ENCODE measurements at regions of chr19 and their contacts with region 1.

Region 1: DNA sequence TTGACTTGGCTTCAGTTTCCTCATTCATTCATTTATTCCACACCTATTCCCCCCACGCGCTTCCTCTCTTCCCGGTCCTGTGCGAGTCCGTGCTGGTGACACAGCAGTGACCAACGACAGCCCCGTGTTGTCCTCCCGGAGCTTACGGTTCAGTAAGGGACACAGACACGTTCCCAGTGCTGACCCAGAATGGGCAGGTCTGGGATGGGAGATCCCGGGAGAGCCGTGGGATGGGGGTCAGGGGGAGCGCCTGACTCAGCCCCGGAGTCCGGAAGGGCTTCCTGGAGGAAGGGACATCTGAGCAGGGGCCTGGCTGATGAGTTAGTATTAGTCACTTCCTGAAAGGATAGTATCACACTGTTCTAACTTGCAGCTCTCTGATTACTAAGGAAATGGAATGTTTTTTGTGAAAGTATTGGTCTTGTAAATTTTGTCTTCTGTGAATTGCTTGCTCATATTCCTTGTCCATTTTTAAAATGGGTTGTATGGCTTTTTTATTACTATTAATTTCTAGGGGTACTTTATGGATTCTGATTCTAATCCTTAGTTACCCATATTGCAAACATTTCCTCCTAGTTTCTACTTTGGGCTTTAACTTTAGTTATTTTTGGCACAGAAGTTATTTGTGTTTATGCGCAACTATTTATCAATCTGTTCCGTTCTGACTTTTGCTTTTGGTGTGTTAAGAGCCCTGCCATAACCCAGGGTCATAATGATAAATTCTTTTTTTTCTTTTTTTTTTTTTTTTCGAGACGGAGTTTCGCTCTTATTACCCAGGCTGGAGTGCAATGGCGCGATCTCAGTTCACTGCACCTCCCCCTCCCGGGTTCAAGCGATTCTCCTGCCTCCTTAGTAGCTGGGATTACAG is 708 bp upstream of the ERCC1 start:
- DNase-seq: no peak
- ATAC-seq: peak; percentile 72
- H3K4me3 ChIP-seq: peak overlapping the region; percentile 61 to 84
- H3K27ac ChIP-seq: peak overlapping the region; percentile 97
- H3K4me1 ChIP-seq: peaks cover 21% of the 10 kb centered on the region
- H3K27me3 ChIP-seq: no peaks in the 10 kb centered on the region
- CTCF ChIP-seq: no peak

Region 2: GRCh38 chr19:45403781-45404556 is 20.5 kb before region 1 on chr19:
- CTCF ChIA-PET with region 1: no interaction called
- POLR2A ChIA-PET with region 1: interaction called, 20 read pairs
- in situ Hi-C with region 1: no loop called
- intact Hi-C with region 1: no loop called
- DNase-seq: no peak
- ATAC-seq: peak; percentile 35
- H3K4me3 ChIP-seq: peak overlapping the region; percentile 94 to 96
- H3K27ac ChIP-seq: peak overlapping the region; percentile 90
- H3K4me1 ChIP-seq: peaks cover 14% of the 10 kb centered on the region
- H3K27me3 ChIP-seq: no peaks in the 10 kb centered on the region
- CTCF ChIP-seq: peak; percentile 82

Region 3: GRCh38 chr19:45439569-45440254 is 15.3 kb after region 1 on chr19:
- CTCF ChIA-PET with region 1: no interaction called
- POLR2A ChIA-PET with region 1: no interaction called
- in situ Hi-C with region 1: no loop called
- intact Hi-C with region 1: no loop called
- DNase-seq: no peak
- ATAC-seq: peak; percentile 62
- H3K4me3 ChIP-seq: peak overlapping the region; percentile 42 to 59
- H3K27ac ChIP-seq: 0 out of 2 replicates have a peak overlapping the region, but pooled peaks have one; percentile 39
- H3K4me1 ChIP-seq: peaks cover 8% of the 10 kb centered on the region
- H3K27me3 ChIP-seq: no peaks in the 10 kb centered on the region
- CTCF ChIP-seq: peak; percentile 98